Caco-2 (cell line): ENCODE measurements at regions of chr3 and their contacts with region 1.

Region 1: GRCh38 chr3:10292505-10293419 is at the start of gene GHRL:
- DNase-seq: peak; percentile 71 to 86
- H3K4me3 ChIP-seq: peak within 1 kb of the TSS; percentile 23
- H3K4me3 Mint-ChIP-seq: peak within 1 kb of the TSS; percentile 66
- H3K27ac Mint-ChIP-seq: peak within 1 kb of the TSS; percentile 90
- H3K4me1 ChIP-seq: peaks cover 26% of the 10 kb centered on the region
- H3K4me1 Mint-ChIP-seq: peaks cover 17% of the 10 kb centered on the region
- H3K27me3 ChIP-seq: no peaks in the 10 kb centered on the region
- H3K27me3 Mint-ChIP-seq: no peaks in the 10 kb centered on the region
- CTCF ChIP-seq: no peak
- total RNA-seq, gene GHRL: not detected in 2 replicates

Region 2: DNA sequence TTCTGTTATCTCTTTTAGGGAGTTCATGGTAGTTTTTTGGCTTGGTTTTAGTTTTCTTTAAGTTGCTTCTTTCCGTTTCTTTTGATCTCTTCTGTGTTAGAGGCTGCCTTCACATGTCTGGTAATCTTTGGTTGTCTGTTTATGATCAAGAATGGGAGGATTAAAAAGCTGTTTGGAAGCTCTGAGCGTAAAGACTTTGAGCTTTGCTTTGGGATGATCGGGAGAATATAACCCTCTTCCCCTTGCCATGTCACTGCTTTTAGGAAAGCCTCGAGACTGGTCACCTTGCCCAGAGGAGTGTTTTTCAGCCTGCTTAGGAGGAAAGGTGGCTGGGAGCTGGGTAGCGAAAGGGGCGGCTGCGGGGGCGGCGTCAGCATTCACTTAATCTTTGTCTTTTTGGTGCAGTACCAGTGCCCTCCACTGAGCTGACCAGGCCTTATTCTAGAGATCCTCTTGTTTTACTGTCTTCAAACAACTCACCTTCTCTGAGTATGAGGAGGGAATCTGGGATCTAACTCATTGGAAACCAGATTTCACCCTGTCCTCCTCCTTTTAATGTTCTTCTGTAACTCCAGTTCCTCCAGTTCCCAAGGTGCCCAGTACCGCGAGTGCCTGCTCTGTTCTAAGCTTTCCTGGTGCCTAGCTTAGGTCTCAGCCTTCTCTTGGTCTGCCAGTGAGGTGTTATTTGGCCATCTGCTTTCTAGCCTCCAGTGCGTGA is 29.0 kb before region 1 on chr3:
- CTCF ChIA-PET with region 1: no interaction called
- POLR2A ChIA-PET with region 1: interaction called, 3 read pairs
- intact Hi-C with region 1: loop called (anchors 2 kb)
- DNase-seq: peak in 1 of 2 experiments; percentile 54
- H3K4me3 ChIP-seq: no peak overlapping the region
- H3K4me3 Mint-ChIP-seq: no peak overlapping the region
- H3K27ac Mint-ChIP-seq: no peak overlapping the region
- H3K4me1 ChIP-seq: no peaks in the 10 kb centered on the region
- H3K4me1 Mint-ChIP-seq: peaks cover 10% of the 10 kb centered on the region
- H3K27me3 ChIP-seq: no peaks in the 10 kb centered on the region
- H3K27me3 Mint-ChIP-seq: no peaks in the 10 kb centered on the region
- CTCF ChIP-seq: peak in 1 of 2 experiments; percentile 47